SK-N-SH (cell line): ENCODE measurements at regions of chr10 and their contacts with region 1.

Region 1: GRCh38 chr10:104139221-104139620 is 17.2 kb downstream of the SFR1 start:
- DNase-seq: peak; percentile 13
- H3K4me3 ChIP-seq: no peak overlapping the region
- H3K27ac ChIP-seq: no peak overlapping the region
- H3K4me1 ChIP-seq: no peaks in the 10 kb centered on the region
- H3K27me3 ChIP-seq: no peaks in the 10 kb centered on the region
- CTCF ChIP-seq: peak; percentile 45
- EP300 ChIP-seq: no peak
- RAD21 ChIP-seq: no peak; the same call in 1 of the 2 replicates

Region 2: GRCh38 chr10:103316087-103316486 is 823.1 kb before region 1 on chr10:
- CTCF ChIA-PET with region 1: no interaction called
- POLR2A ChIA-PET with region 1: no interaction called
- DNase-seq: no peak
- H3K4me3 ChIP-seq: no peak overlapping the region
- H3K27ac ChIP-seq: no peak overlapping the region
- H3K4me1 ChIP-seq: no peaks in the 10 kb centered on the region
- H3K27me3 ChIP-seq: no peaks in the 10 kb centered on the region
- CTCF ChIP-seq: no peak
- EP300 ChIP-seq: no peak
- RAD21 ChIP-seq: no peak

Region 3: GRCh38 chr10:104127411-104127810 is 11.8 kb before region 1 on chr10:
- CTCF ChIA-PET with region 1: interaction called, 10 read pairs
- POLR2A ChIA-PET with region 1: no interaction called
- DNase-seq: peak; percentile 57
- H3K4me3 ChIP-seq: no peak overlapping the region
- H3K27ac ChIP-seq: no peak overlapping the region; a peak in 1 of 4 replicates
- H3K4me1 ChIP-seq: peaks cover 0 to 6% of the 10 kb centered on the region in 2 experiments; a peak in 3 of 4 replicates
- H3K27me3 ChIP-seq: no peaks in the 10 kb centered on the region
- CTCF ChIP-seq: peak; percentile 35
- EP300 ChIP-seq: no peak
- RAD21 ChIP-seq: peak; percentile 44